Heart right ventricle (tissue), 16 donors: ENCODE measurements at regions of chrX and their contacts with region 1.

Region 1: DNA sequence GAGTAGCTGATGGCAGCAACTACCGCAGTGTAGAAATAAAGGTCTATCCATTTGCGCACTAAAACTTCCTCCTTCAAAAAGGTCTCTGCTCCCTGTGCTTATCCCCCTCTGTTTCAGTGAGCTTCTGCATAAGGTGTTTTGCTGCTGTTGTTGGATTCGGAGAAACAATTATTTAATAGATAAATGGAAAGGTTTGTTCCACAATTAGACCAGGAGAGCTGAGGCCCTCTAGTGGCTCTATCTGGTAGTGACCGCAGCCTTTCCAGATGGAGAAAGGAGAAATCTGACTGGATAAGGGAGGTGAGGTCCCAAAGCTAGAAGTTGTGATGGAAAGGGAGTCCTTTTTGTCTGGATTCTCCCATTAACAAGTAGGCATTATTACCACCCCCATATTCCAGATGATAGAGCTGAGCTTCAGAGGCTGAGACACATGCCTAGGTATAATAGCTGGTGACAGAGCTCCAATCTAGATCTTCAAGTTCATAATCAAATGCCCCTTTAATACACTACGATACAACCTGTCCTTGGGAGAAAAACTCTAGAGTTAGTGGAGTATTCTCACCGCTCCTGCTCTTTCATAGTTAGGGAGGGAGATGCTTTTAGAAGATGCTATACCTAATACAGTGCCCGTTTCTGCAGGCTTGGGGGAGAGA is 5.1 kb upstream of the GABRQ start:
- DNase-seq: peak; percentile 13 to 20
- ATAC-seq: no peak
- H3K4me3 ChIP-seq: no peak overlapping the region
- H3K27ac ChIP-seq: no peak overlapping the region
- H3K4me1 ChIP-seq: no peaks in the 10 kb centered on the region
- H3K27me3 ChIP-seq: peaks cover 0 to 43% (median 6%) of the 10 kb centered on the region in 7 donors
- CTCF ChIP-seq: peak; percentile 43 to 84 (median 70)

Region 2: GRCh38 chrX:151753313-151754041 is 879.1 kb before region 1 on chrX:
- intact Hi-C with region 1: loop called (anchors 2 to 5 kb)
- DNase-seq: peak; percentile 15 to 54
- ATAC-seq: peak; percentile 75 to 95 (median 88)
- H3K4me3 ChIP-seq: no peak overlapping the region
- H3K27ac ChIP-seq: no peak overlapping the region
- H3K4me1 ChIP-seq: no peaks in the 10 kb centered on the region
- H3K27me3 ChIP-seq: peaks cover 0 to 49% (median 0%) of the 10 kb centered on the region in 7 donors
- CTCF ChIP-seq: peak; percentile 56 to 82 (median 78)

Region 3: GRCh38 chrX:151825927-151826481 is 806.6 kb before region 1 on chrX:
- intact Hi-C with region 1: loop called in 1 of 10 experiments (anchors 10 kb)
- DNase-seq: no peak
- ATAC-seq: peak in 6 of 8 donors; percentile 20 to 77 (median 40)
- H3K4me3 ChIP-seq: no peak overlapping the region
- H3K27ac ChIP-seq: no peak overlapping the region
- H3K4me1 ChIP-seq: peaks cover 0 to 6% (median 0%) of the 10 kb centered on the region in 9 donors
- H3K27me3 ChIP-seq: no peaks in the 10 kb centered on the region
- CTCF ChIP-seq: peak in 5 of 9 donors; percentile 13 to 33 (median 24)

Region 4: GRCh38 chrX:152733261-152733975 is 100.8 kb after region 1 on chrX and contains the starts of genes CSAG1 and MAGEA12:
- intact Hi-C with region 1: no loop called
- DNase-seq: no peak
- ATAC-seq: no peak
- H3K4me3 ChIP-seq: no peak within 1 kb of the TSS
- H3K27ac ChIP-seq: no peak within 1 kb of the TSS
- H3K4me1 ChIP-seq: no peaks in the 10 kb centered on the region
- H3K27me3 ChIP-seq: no peaks in the 10 kb centered on the region
- CTCF ChIP-seq: no peak
- total RNA-seq, gene CSAG1: not detected
- total RNA-seq, gene MAGEA12: not detected

Region 5: DNA sequence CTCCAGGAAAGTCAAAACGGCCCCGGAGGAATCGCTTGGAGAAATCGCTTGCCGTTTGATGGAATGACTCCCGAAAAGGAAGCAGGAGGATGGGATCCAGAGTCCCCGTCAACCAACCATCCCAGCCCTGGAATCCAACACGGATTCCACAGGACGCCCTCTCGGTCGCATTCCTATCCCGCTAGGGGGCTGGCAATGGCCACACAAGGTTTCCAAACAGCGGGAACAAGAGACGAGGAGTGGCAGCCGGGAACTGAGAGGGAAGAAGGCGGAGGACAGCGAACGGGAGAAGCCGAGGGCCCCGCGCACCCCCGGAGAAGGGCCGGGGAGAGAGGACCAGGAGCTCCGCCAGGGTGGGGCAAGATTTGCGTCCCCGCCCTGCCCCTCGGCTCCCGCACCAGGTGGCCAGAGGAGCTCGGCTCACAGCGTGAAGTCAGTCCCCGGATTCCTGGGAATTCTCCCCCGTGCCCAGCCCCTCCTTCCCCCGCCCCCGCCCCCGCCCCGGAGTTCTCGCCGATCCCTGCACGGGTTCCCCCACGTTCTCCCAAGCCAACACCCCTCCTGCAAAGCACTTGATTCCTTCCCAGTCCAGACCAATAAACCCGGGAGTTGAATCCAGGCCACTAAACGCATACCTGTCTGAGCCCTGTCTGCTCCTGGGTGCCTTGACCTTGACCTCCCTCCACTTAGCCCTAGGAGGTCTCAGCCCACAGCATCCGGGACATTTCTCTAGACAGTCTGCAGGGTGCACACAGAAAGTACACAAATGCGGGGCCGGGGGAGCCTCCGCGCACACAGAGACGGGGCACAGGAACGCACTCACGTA is 1196.4 kb after region 1 on chrX:
- intact Hi-C with region 1: no loop called
- DNase-seq: no peak
- ATAC-seq: peak in 3 of 8 donors; percentile 32 to 56 (median 50)
- H3K4me3 ChIP-seq: peak overlapping the region; percentile 18 to 55 (median 49)
- H3K27ac ChIP-seq: peak overlapping the region in 3 of 10 donors; percentile 16 to 51 (median 28)
- H3K4me1 ChIP-seq: peaks cover 0 to 16% (median 0%) of the 10 kb centered on the region in 9 donors
- H3K27me3 ChIP-seq: peaks cover 0 to 94% (median 0%) of the 10 kb centered on the region in 7 donors
- CTCF ChIP-seq: no peak